ENCODE measurements at regions of chr14 and their contacts with region 1.

Region 1: GRCh38 chr14:63795532-63795931 is 57.3 kb upstream of the SYNE2 start:
- DNase-seq: no peak
- H3K4me3 ChIP-seq: no peak overlapping the region
- H3K27ac ChIP-seq: no peak overlapping the region
- H3K4me1 ChIP-seq: peaks cover 0 to 3% (median 0%) of the 10 kb centered on the region in 4 donors
- H3K27me3 ChIP-seq: no peaks in the 10 kb centered on the region
- CTCF ChIP-seq: no peak
- EP300 ChIP-seq: no peak
- POLR2A ChIP-seq: no peak

Region 2: GRCh38 chr14:63993992-63994391 is 198.5 kb after region 1 on chr14:
- intact Hi-C with region 1: loop called (anchors 10 kb)
- DNase-seq: no peak
- H3K4me3 ChIP-seq: no peak overlapping the region
- H3K27ac ChIP-seq: no peak overlapping the region
- H3K4me1 ChIP-seq: no peaks in the 10 kb centered on the region
- H3K27me3 ChIP-seq: no peaks in the 10 kb centered on the region
- CTCF ChIP-seq: peak in 1 of 4 experiments; percentile 18
- EP300 ChIP-seq: no peak
- POLR2A ChIP-seq: no peak

Region 3: GRCh38 chr14:64303471-64303917 is 508.0 kb after region 1 on chr14:
- intact Hi-C with region 1: loop called (anchors 5 kb)
- DNase-seq: no peak
- H3K4me3 ChIP-seq: no peak overlapping the region
- H3K27ac ChIP-seq: no peak overlapping the region
- H3K4me1 ChIP-seq: no peaks in the 10 kb centered on the region
- H3K27me3 ChIP-seq: no peaks in the 10 kb centered on the region
- CTCF ChIP-seq: peak in 3 of 4 experiments; percentile 44 to 74 (median 48)
- EP300 ChIP-seq: no peak
- POLR2A ChIP-seq: no peak

Measured in sigmoid colon (tissue), 7 donors.